ENCODE measurements at regions of chr20 and their contacts with region 1.

Region 1: GRCh38 chr20:59231124-59231804 is 67.6 kb downstream of the ZNF831 start:
- DNase-seq: no peak
- H3K4me3 ChIP-seq: no peak overlapping the region
- H3K4me3 Mint-ChIP-seq: no peak overlapping the region
- H3K27ac ChIP-seq: no peak overlapping the region
- H3K27ac Mint-ChIP-seq: peak overlapping the region in 4 of 7 donors; percentile 9 to 64 (median 46)
- H3K4me1 ChIP-seq: peaks cover 7% of the 10 kb centered on the region
- H3K4me1 Mint-ChIP-seq: peaks cover 10 to 28% (median 19%) of the 10 kb centered on the region in 4 donors
- H3K27me3 ChIP-seq: no peaks in the 10 kb centered on the region
- H3K27me3 Mint-ChIP-seq: no peaks in the 10 kb centered on the region

Region 2: GRCh38 chr20:59385480-59385879 is 154.2 kb after region 1 on chr20:
- CTCF ChIA-PET with region 1: no interaction called
- POLR2A ChIA-PET with region 1: no interaction called
- intact Hi-C with region 1: loop called (anchors 5 kb)
- DNase-seq: peak in 4 of 5 donors; percentile 12 to 44 (median 20)
- H3K4me3 ChIP-seq: no peak overlapping the region
- H3K4me3 Mint-ChIP-seq: peak overlapping the region in 1 of 8 donors; percentile 24
- H3K27ac ChIP-seq: no peak overlapping the region
- H3K27ac Mint-ChIP-seq: peak overlapping the region in 6 of 7 donors; percentile 13 to 85 (median 57)
- H3K4me1 ChIP-seq: peaks cover 10% of the 10 kb centered on the region
- H3K4me1 Mint-ChIP-seq: peaks cover 3 to 9% (median 6%) of the 10 kb centered on the region in 4 donors
- H3K27me3 ChIP-seq: no peaks in the 10 kb centered on the region
- H3K27me3 Mint-ChIP-seq: peaks cover 3 to 4% of the 10 kb centered on the region in 2 donors

Measured in CD4-positive, alpha-beta memory T cell (primary cell).